ENCODE measurements at regions of chr1 and their contacts with region 1.

Region 1: GRCh38 chr1:42576935-42577334 is 81.3 kb upstream of the PPIH start:
- DNase-seq: no peak
- H3K4me3 ChIP-seq: no peak overlapping the region
- H3K27ac ChIP-seq: no peak overlapping the region
- H3K4me1 ChIP-seq: no peaks in the 10 kb centered on the region
- H3K27me3 ChIP-seq: peaks cover 3 to 4% of the 10 kb centered on the region in 2 experiments
- CTCF ChIP-seq: no peak
- POLR2A ChIP-seq: no peak

Region 2: DNA sequence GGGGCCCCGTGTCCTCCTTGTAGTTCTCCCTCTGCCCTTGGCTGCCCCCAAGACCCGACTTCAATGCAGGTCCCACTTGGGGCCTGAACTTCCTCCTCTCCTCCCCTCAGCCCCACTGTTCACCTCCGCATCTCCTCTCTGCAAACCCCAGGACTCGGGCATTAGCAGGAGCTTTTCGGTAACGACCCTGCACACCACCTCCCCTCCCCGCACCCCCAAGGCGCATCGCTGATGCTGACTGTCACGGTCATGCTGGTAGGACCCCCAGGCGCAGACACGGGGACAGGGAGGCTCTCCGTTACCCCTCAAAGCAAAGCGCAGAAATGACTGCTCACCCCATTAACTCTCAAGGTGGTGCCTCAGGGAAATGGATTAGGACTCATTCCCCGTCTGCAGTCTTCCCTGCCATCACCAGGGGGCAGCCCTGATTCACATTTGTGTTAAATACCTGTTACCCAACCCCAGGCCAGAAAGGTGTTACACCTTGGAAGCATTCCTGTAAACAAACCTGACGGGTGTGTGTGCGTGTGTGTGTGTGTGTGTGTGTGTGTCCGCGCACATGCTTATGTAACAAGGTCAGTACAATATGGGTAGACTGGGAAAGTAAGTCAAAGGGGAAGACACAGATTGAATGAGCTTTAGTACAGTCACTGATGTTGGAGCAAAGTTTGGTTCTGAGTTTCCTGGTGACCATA is 430.2 kb before region 1 on chr1:
- CTCF ChIA-PET with region 1: interaction called, 5 read pairs
- POLR2A ChIA-PET with region 1: no interaction called
- dilution Hi-C with region 1: no loop called
- intact Hi-C with region 1: loop called (anchors 5 kb)
- DNase-seq: peak; percentile 49
- H3K4me3 ChIP-seq: no peak overlapping the region
- H3K27ac ChIP-seq: no peak overlapping the region
- H3K4me1 ChIP-seq: no peaks in the 10 kb centered on the region
- H3K27me3 ChIP-seq: peaks cover 21 to 22% of the 10 kb centered on the region in 2 experiments
- CTCF ChIP-seq: peak; percentile 74 to 91
- POLR2A ChIP-seq: no peak

Region 3: DNA sequence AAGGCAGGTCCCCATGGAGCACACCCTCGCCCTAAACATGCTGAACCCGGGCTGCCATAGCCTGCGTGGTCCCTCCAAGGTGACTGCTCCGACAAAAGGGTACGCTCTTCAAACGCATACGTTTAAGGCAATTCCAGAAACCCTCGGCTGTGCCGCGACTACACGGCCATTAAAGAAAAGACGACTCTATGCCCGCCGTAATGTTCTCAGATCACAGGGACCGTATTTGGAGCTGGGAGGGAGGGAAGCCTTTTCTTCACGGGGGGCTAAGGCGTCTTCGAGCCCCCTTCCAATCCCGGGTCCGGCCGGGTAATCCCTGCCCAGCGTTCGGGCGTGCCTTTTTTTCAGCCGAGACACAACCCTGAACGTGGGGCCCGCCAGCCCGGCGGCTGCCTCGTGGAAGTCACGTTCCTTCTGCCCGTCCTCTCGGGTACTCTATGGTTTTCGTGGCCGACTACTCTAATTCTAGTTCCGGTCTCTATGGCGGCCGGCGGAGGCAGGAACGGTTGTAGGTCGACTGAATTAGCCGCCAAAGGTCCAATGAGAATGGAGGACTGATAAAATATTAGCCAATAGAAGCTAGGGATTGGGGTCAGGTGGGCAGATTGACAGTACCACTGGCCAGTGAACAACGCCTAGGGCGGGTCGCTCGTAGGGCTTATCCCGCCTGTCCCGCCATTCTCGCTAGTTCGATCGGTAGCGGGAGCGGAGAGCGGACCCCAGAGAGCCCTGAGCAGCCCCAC is 105.0 kb after region 1 on chr1 and contains the start of gene YBX1:
- CTCF ChIA-PET with region 1: interaction called, 8 read pairs
- POLR2A ChIA-PET with region 1: no interaction called
- dilution Hi-C with region 1: no loop called
- intact Hi-C with region 1: loop called (anchors 2 kb)
- DNase-seq: peak; percentile 99
- H3K4me3 ChIP-seq: peak within 1 kb of the TSS; percentile 76 to 99 (median 95)
- H3K27ac ChIP-seq: peak within 1 kb of the TSS; percentile 72
- H3K4me1 ChIP-seq: peaks cover 41% of the 10 kb centered on the region
- H3K27me3 ChIP-seq: no peaks in the 10 kb centered on the region
- CTCF ChIP-seq: no peak
- POLR2A ChIP-seq: peak; percentile 86
- total RNA-seq, gene YBX1: 783 and 829 TPM in 2 replicates

Region 4: GRCh38 chr1:42730988-42731387 is 154.1 kb after region 1 on chr1:
- CTCF ChIA-PET with region 1: interaction called, 7 read pairs
- POLR2A ChIA-PET with region 1: no interaction called
- dilution Hi-C with region 1: no loop called
- intact Hi-C with region 1: loop called (anchors 2 kb)
- DNase-seq: no peak
- H3K4me3 ChIP-seq: no peak overlapping the region
- H3K27ac ChIP-seq: no peak overlapping the region
- H3K4me1 ChIP-seq: no peaks in the 10 kb centered on the region
- H3K27me3 ChIP-seq: no peaks in the 10 kb centered on the region
- CTCF ChIP-seq: no peak
- POLR2A ChIP-seq: no peak

Region 5: GRCh38 chr1:42747125-42747524 is 170.2 kb after region 1 on chr1:
- CTCF ChIA-PET with region 1: interaction called, 79 read pairs
- POLR2A ChIA-PET with region 1: no interaction called
- dilution Hi-C with region 1: no loop called
- intact Hi-C with region 1: loop called (anchors 1 kb)
- DNase-seq: peak; percentile 22
- H3K4me3 ChIP-seq: no peak overlapping the region
- H3K27ac ChIP-seq: no peak overlapping the region
- H3K4me1 ChIP-seq: no peaks in the 10 kb centered on the region
- H3K27me3 ChIP-seq: no peaks in the 10 kb centered on the region
- CTCF ChIP-seq: peak; percentile 52 to 78
- POLR2A ChIP-seq: no peak

Region 6: DNA sequence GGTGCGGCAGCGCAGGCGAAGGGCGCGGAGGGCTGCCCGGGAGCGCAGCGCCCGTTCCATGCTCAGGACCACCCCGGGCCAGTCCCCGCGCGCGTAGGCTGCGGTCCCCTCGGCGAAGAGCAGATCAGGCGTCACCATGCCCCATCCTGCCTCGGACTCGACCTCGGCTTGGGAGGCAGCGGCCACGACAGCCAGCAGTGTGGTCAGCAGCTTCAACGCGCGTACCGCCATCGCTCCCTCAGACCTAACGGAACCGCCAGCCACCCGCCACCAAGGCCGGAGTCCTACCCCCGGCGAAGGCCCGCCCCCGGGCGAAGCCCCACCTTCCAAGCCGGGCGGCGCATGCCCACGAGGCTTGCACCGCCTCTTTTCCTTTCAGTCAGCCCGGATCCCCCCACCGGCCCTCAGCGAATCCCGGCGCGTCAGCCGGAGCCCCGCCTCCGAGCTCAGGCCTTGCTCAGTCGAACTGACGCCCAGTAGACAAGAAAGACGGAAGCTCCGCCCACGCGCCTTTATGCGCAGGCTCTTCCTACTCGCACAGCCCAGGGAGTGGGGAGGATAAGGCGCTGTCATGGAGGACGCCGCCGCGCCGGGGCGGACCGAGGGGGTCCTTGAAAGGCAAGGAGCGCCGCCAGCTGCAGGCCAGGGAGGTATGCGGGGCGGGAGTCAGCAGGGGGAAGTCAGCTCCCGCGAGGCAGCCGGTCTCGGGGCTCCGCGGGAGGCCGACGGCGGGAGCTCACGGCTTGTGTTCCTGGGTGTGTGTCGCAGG is 190.0 kb after region 1 on chr1 and contains the starts of genes C1orf50 and P3H1:
- CTCF ChIA-PET with region 1: interaction called, 32 read pairs
- POLR2A ChIA-PET with region 1: no interaction called
- dilution Hi-C with region 1: no loop called
- intact Hi-C with region 1: no loop called
- DNase-seq: peak; percentile 100
- H3K4me3 ChIP-seq: peak within 1 kb of the TSS; percentile 65 to 91 (median 90)
- H3K27ac ChIP-seq: peak within 1 kb of the TSS; percentile 62
- H3K4me1 ChIP-seq: peaks cover 20% of the 10 kb centered on the region
- H3K27me3 ChIP-seq: no peaks in the 10 kb centered on the region
- CTCF ChIP-seq: no peak
- POLR2A ChIP-seq: peak; percentile 92
- total RNA-seq, gene C1orf50: 4.0 and 7.4 TPM in 2 replicates
- total RNA-seq, gene P3H1: 136 and 146 TPM in 2 replicates

Region 7: DNA sequence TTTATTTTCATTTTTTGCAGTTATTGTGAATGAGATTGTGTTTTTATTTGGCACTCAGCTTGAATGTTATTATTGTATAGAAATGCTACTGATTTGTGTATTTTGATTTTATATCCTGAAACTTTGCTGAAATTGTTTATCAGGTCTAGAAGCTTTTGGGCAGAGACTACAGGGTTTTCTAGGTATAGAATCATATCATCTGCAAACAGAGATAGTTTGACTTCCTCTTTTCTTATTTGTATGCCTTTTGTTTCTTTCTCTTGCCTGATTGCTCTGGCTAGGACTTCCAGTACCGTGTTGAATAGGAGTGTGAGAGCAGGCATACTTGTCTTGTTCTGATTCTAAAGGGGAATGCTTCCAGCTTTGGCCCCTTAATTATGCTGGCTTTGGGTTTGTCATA is 296.7 kb after region 1 on chr1:
- CTCF ChIA-PET with region 1: no interaction called
- POLR2A ChIA-PET with region 1: no interaction called
- dilution Hi-C with region 1: no loop called
- intact Hi-C with region 1: no loop called
- DNase-seq: no peak
- H3K4me3 ChIP-seq: no peak overlapping the region
- H3K27ac ChIP-seq: no peak overlapping the region
- H3K4me1 ChIP-seq: no peaks in the 10 kb centered on the region
- H3K27me3 ChIP-seq: peaks cover 15 to 29% of the 10 kb centered on the region in 2 experiments
- CTCF ChIP-seq: no peak
- POLR2A ChIP-seq: no peak

Measured in endothelial cell of umbilical vein (primary cell).